Activated T-helper 2 cell treated with anti-CD3 and anti-CD28 coated beads, Interferon-gamma antibody, Interleukin-2, Interleukin-4, amounts not matched to agents 10 μg/mL and 5 μg/mL and 100 μg/mL, durations not matched to agents 14 hours and 24 hours and 36 hours (primary cell): ENCODE measurements at regions of chr7 and their contacts with region 1.

Region 1: DNA sequence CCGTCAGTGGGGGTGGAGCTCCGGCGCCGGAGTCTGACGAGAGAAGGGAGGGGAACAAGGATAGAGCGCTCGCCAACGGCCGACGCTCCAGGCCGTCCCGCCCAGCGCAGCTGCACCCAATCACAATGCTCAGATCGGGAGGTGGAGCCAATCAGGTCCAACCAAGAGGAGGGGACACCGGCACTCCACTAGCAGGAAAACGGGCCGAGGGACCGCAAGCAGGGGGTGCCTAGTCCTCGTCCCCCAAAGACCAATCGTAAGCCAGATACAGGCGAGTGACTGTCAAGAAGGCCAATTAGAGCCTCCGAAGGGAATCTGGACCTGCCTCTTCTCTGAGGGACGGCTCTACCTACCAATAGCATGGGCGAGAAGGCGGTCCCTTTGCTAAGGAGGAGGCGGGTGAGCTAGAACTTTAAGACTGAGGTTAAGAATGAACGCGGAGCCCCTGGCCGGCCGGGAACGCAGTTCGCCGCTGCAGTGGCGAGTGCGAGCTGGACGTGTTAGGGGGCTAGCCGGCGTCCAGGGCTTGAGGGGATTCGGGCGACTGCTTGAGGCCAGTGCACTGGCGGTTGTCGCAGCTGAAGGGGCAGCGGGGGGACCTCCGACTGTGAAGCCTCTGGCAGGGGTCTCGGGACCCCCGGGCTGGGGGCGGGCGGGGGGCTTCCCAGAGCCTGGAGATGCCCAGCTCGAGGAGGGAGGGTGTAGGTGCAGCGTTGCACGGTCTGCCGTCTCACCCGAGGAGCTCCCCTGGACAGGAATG is at the start of gene FBXO24:
- DNase-seq: peak; percentile 100
- H3K4me3 Mint-ChIP-seq: peak within 1 kb of the TSS; percentile 96
- H3K27ac Mint-ChIP-seq: peak within 1 kb of the TSS; percentile 80
- H3K4me1 Mint-ChIP-seq: peaks cover 24% of the 10 kb centered on the region
- H3K27me3 Mint-ChIP-seq: peaks cover 3% of the 10 kb centered on the region
- total RNA-seq, gene FBXO24: 0.37 and 0.91 TPM in 2 replicates

Region 2: GRCh38 chr7:99499721-99500636 is 1086.5 kb before region 1 on chr7 and contains the start of gene ZNF394:
- intact Hi-C with region 1: no loop called
- DNase-seq: peak; percentile 86
- H3K4me3 Mint-ChIP-seq: peak within 1 kb of the TSS; percentile 94
- H3K27ac Mint-ChIP-seq: peak within 1 kb of the TSS; percentile 98
- H3K4me1 Mint-ChIP-seq: peaks cover 20% of the 10 kb centered on the region
- H3K27me3 Mint-ChIP-seq: no peaks in the 10 kb centered on the region
- total RNA-seq, gene ZNF394: 36.4 and 40.7 TPM in 2 replicates

Region 3: DNA sequence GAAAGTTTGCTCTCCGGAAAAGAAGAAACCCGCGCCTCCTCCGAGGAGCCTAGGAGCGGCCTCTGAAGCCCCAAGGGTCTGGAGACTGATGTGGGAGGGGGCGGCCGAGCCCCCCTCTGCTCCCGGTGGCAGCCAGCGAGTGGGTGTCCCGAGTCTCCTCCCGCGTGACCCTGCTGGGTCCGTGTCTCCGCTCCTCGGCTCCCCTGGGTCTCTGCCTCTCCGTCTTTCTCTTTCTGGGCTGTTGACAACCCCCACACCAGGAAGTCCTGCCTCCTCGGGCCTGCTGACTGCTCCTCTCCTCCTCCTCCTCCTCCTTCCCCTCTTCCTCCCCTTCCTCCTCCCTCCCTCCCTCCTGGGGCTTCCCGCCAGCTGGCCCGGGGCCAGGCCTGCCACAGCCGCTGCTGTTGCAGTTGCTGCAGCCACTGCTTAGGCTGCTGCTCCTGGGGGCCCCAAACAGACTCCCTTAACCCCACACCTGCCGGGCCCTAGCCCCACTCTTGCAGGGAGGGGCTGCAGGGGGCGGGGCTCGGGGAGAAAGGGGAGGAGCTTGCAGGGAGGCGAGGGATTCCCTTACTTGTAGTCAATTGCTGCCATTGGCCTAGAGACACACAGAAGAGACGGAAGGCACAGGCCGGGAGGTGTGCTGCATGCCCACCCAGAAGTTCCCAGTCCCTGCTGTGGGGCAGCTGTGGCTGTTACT is 107.3 kb before region 1 on chr7 and contains the start of gene TSC22D4:
- intact Hi-C with region 1: loop called (anchors 1 kb)
- DNase-seq: peak; percentile 86
- H3K4me3 Mint-ChIP-seq: peak within 1 kb of the TSS; percentile 99
- H3K27ac Mint-ChIP-seq: peak within 1 kb of the TSS; percentile 88
- H3K4me1 Mint-ChIP-seq: peaks cover 26% of the 10 kb centered on the region
- H3K27me3 Mint-ChIP-seq: no peaks in the 10 kb centered on the region
- total RNA-seq, gene TSC22D4: 103 and 106 TPM in 2 replicates

Region 4: GRCh38 chr7:100568896-100569844 is 17.3 kb before region 1 on chr7:
- intact Hi-C with region 1: loop called (anchors 2 kb)
- DNase-seq: peak; percentile 30
- H3K4me3 Mint-ChIP-seq: no peak overlapping the region
- H3K27ac Mint-ChIP-seq: no peak overlapping the region
- H3K4me1 Mint-ChIP-seq: peaks cover 20% of the 10 kb centered on the region
- H3K27me3 Mint-ChIP-seq: no peaks in the 10 kb centered on the region

Region 5: GRCh38 chr7:100611974-100612729 is 25.7 kb after region 1 on chr7 and contains the start of gene MOSPD3:
- intact Hi-C with region 1: loop called (anchors 1 kb)
- DNase-seq: peak; percentile 98
- H3K4me3 Mint-ChIP-seq: peak within 1 kb of the TSS; percentile 97
- H3K27ac Mint-ChIP-seq: peak within 1 kb of the TSS; percentile 99
- H3K4me1 Mint-ChIP-seq: peaks cover 10% of the 10 kb centered on the region
- H3K27me3 Mint-ChIP-seq: no peaks in the 10 kb centered on the region
- total RNA-seq, gene MOSPD3: 14.1 TPM in 2 replicates

Region 6: GRCh38 chr7:100874577-100875355 is 288.3 kb after region 1 on chr7 and contains the start of gene SRRT:
- intact Hi-C with region 1: loop called (anchors 10 kb)
- DNase-seq: peak; percentile 98
- H3K4me3 Mint-ChIP-seq: peak within 1 kb of the TSS; percentile 96
- H3K27ac Mint-ChIP-seq: peak within 1 kb of the TSS; percentile 94
- H3K4me1 Mint-ChIP-seq: peaks cover 28% of the 10 kb centered on the region
- H3K27me3 Mint-ChIP-seq: no peaks in the 10 kb centered on the region
- total RNA-seq, gene SRRT: 280 and 290 TPM in 2 replicates